ENCODE measurements at regions of chr3 and their contacts with region 1.

Region 1: DNA sequence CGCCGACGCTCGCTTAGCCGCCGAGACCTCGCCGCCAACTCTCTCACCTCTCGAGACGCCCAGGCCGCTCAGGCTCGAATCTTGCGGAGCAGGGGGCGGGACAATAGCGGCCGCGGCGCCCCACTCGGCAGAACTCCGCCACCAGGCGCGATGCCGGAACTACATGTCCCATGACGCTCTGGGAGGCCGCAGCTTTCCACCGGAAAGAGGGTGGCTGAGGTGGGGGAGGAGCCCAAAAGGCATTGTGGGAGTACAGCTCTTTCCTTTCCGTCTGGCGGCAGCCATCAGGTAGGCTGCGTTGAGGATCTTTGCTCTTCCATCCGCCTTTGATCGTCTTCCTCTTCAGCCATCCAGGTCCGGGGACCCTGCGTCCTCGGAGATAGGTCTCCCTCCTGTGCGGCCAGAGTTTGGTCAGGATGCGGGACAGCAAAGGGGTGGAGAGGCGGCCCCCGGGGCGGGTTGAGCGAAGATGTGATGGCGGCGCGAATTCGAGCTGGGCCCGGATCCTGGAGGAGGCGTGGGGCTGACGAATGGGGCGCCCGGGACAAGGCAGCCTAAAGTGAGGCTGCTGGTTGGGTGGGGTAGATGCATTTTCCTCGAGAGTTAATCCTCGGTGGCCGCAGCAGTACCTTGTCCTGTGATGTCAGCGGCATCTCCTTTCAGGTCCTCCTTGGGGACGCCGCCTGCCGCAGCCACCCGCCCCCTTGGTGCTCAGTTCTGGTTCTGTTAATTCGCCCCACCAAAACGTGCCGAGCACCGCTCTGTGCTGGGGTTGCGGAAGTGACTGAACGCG is at the starts of genes NKIRAS1 and RPL15:
- DNase-seq: peak; percentile 94
- ATAC-seq: peak; percentile 94
- H3K4me3 ChIP-seq: peak within 1 kb of the TSS; percentile 95 to 99 (median 98)
- H3K27ac ChIP-seq: peak within 1 kb of the TSS; percentile 81
- H3K4me1 ChIP-seq: peaks cover 54% of the 10 kb centered on the region
- H3K27me3 ChIP-seq: no peaks in the 10 kb centered on the region; a peak in 1 of 5 replicates
- CTCF ChIP-seq: peak; percentile 51
- EP300 ChIP-seq: 0 out of 4 replicates have a peak, but pooled peaks of 1 of the 2 experiments have one; percentile 36
- POLR2A ChIP-seq: peak; percentile 100
- RAD21 ChIP-seq: no peak; the same call in 1 of the 2 replicates
- total RNA-seq, gene NKIRAS1: 8.0 and 10.5 TPM in 2 replicates
- total RNA-seq, gene RPL15: 1,297 and 1,763 TPM in 2 replicates

Region 2: DNA sequence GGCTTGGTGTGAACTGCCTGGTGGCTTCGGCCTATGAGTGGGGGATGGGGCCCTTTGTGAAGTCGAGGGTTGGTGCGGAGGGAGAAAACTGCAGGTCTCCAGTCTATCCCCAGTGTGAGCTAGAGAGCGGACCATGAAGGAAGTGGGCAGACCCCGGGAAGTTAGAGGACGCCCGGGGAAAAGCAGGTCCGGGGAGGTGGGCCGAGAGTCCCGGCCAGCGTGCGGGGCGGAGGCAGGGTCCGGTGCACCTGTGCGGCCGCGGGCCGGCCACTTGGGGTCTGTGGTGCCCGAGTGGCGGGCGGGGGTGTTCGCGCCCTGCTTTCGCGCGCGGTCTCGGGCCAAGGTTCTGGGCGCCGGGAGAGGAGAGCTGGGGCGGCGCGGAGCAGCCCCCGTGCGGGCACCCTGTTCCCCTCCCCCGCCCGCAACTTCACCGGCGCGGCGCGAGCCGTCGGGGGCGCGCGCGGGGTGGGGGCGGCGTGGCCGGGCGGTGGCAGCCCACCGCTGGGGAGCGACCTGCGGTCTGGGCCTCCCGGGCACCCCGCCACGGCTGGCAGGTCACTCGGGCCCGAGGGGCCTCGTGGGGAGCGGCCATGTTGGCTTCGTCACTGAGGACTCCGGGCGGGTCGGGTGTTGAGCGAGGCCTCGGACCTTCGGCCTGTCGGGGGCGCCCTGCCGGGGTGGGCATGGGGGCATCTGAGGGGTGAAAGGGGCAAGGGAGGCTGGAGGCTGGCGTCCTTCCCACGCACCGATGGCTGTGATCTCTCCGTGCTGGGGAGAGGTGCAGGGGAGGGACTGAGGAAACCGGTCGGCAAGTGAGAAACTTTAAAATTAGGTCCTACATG is 106.5 kb before region 1 on chr3:
- CTCF ChIA-PET with region 1: no interaction called
- POLR2A ChIA-PET with region 1: interaction called, 20 read pairs
- in situ Hi-C with region 1: no loop called
- intact Hi-C with region 1: no loop called
- DNase-seq: peak; percentile 41
- ATAC-seq: peak; percentile 79
- H3K4me3 ChIP-seq: peak overlapping the region; percentile 75 to 90 (median 79)
- H3K27ac ChIP-seq: peak overlapping the region; percentile 85
- H3K4me1 ChIP-seq: peaks cover 55% of the 10 kb centered on the region
- H3K27me3 ChIP-seq: no peaks in the 10 kb centered on the region; a peak in 1 of 5 replicates
- CTCF ChIP-seq: peak; percentile 70
- EP300 ChIP-seq: no peak
- POLR2A ChIP-seq: peak; percentile 56 to 66
- RAD21 ChIP-seq: no peak

Region 3: DNA sequence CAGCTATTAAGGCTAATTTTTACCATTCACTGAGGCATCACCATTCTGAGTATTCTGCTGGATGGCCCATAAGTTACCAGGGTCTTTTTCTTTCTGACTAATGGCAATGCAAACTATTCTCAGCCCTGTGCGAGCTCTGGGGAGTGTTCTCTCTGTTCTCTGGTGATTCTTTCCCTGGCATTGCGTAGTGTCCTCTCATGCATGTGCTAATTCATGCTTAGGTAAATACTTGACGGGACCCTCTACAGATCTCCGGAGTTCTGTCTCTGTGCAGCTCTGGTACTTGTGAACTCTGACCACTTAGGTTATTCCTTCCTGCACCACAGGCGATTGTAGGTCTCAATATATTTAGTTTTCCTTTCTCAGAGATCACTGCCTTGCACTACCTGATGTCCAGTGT is 76.6 kb before region 1 on chr3:
- CTCF ChIA-PET with region 1: no interaction called
- POLR2A ChIA-PET with region 1: interaction called, 10 read pairs
- in situ Hi-C with region 1: no loop called
- intact Hi-C with region 1: no loop called
- DNase-seq: peak; percentile 76
- ATAC-seq: peak; percentile 100
- H3K4me3 ChIP-seq: peak overlapping the region in 1 of 3 experiments; percentile 10; a peak in 2 of 6 replicates
- H3K27ac ChIP-seq: peak overlapping the region; percentile 61
- H3K4me1 ChIP-seq: peaks cover 17% of the 10 kb centered on the region
- H3K27me3 ChIP-seq: no peaks in the 10 kb centered on the region
- CTCF ChIP-seq: no peak
- EP300 ChIP-seq: peak in 1 of 2 experiments; percentile 34; a peak in 1 of 4 replicates
- POLR2A ChIP-seq: no peak
- RAD21 ChIP-seq: no peak

Region 4: DNA sequence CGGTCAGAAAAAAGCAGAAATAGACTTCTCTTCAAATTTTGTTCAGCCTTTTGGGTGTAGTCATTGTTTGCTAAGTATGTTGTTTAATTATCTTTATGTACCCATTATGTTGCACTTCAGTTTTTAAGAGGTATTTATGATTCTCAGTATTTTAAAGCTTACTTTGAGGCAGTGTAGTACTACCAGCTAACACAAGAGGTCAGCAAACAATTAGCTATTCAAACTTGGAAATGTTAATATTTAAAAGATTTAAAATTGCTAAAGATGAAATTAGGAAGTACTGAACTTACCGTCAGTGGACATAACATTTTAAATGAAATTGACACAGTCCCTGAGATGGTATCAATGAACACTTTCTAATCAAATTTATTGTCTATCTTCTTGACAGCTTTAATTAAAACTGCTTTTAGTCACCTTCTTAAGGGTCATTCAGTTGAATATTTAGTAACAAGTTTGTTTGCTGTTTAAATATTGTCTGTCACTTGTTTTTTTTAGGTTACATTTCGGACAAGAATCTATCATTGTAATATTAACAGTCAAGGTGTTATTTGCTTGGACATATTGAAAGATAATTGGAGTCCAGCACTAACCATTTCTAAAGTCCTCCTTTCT is 28.4 kb before region 1 on chr3:
- CTCF ChIA-PET with region 1: no interaction called
- POLR2A ChIA-PET with region 1: interaction called, 13 read pairs
- in situ Hi-C with region 1: no loop called
- intact Hi-C with region 1: no loop called
- DNase-seq: peak; percentile 22
- ATAC-seq: no peak; the same call in 2 of the 3 replicates
- H3K4me3 ChIP-seq: no peak overlapping the region
- H3K27ac ChIP-seq: no peak overlapping the region
- H3K4me1 ChIP-seq: no peaks in the 10 kb centered on the region; the same call in 1 of the 2 replicates
- H3K27me3 ChIP-seq: no peaks in the 10 kb centered on the region
- CTCF ChIP-seq: peak; percentile 58
- EP300 ChIP-seq: no peak
- POLR2A ChIP-seq: no peak
- RAD21 ChIP-seq: no peak

Region 5: DNA sequence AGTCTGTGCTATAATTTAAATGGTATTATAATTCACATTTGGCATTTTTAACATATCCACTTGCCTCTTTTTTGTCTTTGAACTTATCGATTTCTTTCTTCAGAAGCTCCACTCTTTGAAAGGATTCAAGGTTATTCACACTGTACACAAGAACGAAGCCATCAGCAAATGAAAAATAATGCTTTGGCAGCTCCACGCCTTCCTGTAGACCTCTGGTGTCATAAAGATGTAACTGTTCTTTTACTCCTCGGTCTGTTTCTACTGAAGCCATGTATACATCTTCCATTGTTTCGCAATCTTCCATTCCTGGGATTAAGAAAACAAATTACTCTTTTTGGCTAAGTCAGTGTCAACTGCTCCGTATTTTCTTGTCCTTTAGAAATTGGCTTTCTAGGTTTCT is 16.3 kb before region 1 on chr3:
- CTCF ChIA-PET with region 1: no interaction called
- POLR2A ChIA-PET with region 1: interaction called, 21 read pairs
- in situ Hi-C with region 1: no loop called
- intact Hi-C with region 1: no loop called
- DNase-seq: peak; percentile 68
- ATAC-seq: peak; percentile 96
- H3K4me3 ChIP-seq: no peak overlapping the region
- H3K27ac ChIP-seq: peak overlapping the region; percentile 26
- H3K4me1 ChIP-seq: peaks cover 10% of the 10 kb centered on the region
- H3K27me3 ChIP-seq: no peaks in the 10 kb centered on the region
- CTCF ChIP-seq: peak; percentile 32; the same call in 1 of the 2 replicates
- EP300 ChIP-seq: no peak; a peak in 1 of 4 replicates
- POLR2A ChIP-seq: no peak
- RAD21 ChIP-seq: 0 out of 2 replicates have a peak, but pooled peaks have one; percentile 17

Region 6: GRCh38 chr3:23940775-23941174 is 23.7 kb after region 1 on chr3:
- CTCF ChIA-PET with region 1: no interaction called
- POLR2A ChIA-PET with region 1: interaction called, 43 read pairs
- in situ Hi-C with region 1: no loop called
- intact Hi-C with region 1: loop called (anchors 1 kb)
- DNase-seq: no peak
- ATAC-seq: no peak
- H3K4me3 ChIP-seq: no peak overlapping the region
- H3K27ac ChIP-seq: no peak overlapping the region
- H3K4me1 ChIP-seq: peaks cover 10% of the 10 kb centered on the region
- H3K27me3 ChIP-seq: peaks cover 0 to 9% of the 10 kb centered on the region in 2 experiments; a peak in 2 of 5 replicates
- CTCF ChIP-seq: no peak
- EP300 ChIP-seq: no peak
- POLR2A ChIP-seq: no peak
- RAD21 ChIP-seq: no peak

Region 7: GRCh38 chr3:23945903-23946751 is 29.0 kb after region 1 on chr3:
- CTCF ChIA-PET with region 1: no interaction called
- POLR2A ChIA-PET with region 1: interaction called, 43 read pairs
- in situ Hi-C with region 1: no loop called
- intact Hi-C with region 1: loop called (anchors 1 kb)
- DNase-seq: peak; percentile 89
- ATAC-seq: peak; percentile 88
- H3K4me3 ChIP-seq: peak overlapping the region; percentile 61 to 90 (median 75)
- H3K27ac ChIP-seq: peak overlapping the region; percentile 94
- H3K4me1 ChIP-seq: peaks cover 55% of the 10 kb centered on the region
- H3K27me3 ChIP-seq: peaks cover 0 to 5% of the 10 kb centered on the region in 2 experiments; a peak in 1 of 5 replicates
- CTCF ChIP-seq: no peak
- EP300 ChIP-seq: no peak; a peak in 1 of 4 replicates
- POLR2A ChIP-seq: peak; percentile 71 to 80
- RAD21 ChIP-seq: no peak; the same call in 1 of the 2 replicates